HCT116 (cell line): ENCODE measurements at regions of chr1 and their contacts with region 1.

Region 1: GRCh38 chr1:88180449-88181108 is 503.5 kb upstream of the PKN2 start:
- DNase-seq: peak; percentile 71
- ATAC-seq: peak; percentile 97
- H3K4me3 ChIP-seq: no peak overlapping the region
- H3K27ac ChIP-seq: no peak overlapping the region
- H3K4me1 ChIP-seq: peaks cover 2 to 6% of the 10 kb centered on the region in 2 experiments; a peak in 3 of 4 replicates
- H3K27me3 ChIP-seq: no peaks in the 10 kb centered on the region
- CTCF ChIP-seq: peak; percentile 71 to 98 (median 98)
- POLR2A ChIP-seq: no peak
- RAD21 ChIP-seq: peak; percentile 87

Region 2: DNA sequence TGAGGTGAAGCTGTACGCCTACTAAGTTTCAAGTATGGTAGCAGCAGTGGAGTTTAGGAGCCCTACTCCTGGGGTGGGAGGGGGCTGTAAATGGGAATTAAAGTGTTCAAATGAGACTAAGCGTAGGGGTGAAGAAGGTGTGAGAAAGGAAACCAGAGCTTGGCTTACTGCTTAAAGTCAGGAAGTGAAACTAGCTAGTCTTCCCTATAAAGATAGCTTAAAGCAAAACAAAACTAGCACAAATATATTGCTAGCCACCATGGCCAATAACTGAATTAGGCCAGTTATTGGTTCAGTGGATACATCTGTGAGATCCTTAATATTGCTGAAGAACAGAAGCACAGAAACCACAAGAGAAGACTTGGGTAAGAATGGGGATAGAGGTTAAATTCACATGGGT is 11.3 kb after region 1 on chr1:
- CTCF ChIA-PET with region 1: interaction called, 27 read pairs
- POLR2A ChIA-PET with region 1: interaction called, 3 read pairs
- RAD21 ChIA-PET with region 1: no interaction called
- intact Hi-C with region 1: no loop called
- DNase-seq: no peak
- ATAC-seq: no peak
- H3K4me3 ChIP-seq: no peak overlapping the region
- H3K27ac ChIP-seq: no peak overlapping the region
- H3K4me1 ChIP-seq: no peaks in the 10 kb centered on the region
- H3K27me3 ChIP-seq: no peaks in the 10 kb centered on the region
- CTCF ChIP-seq: no peak
- POLR2A ChIP-seq: no peak
- RAD21 ChIP-seq: no peak

Region 3: DNA sequence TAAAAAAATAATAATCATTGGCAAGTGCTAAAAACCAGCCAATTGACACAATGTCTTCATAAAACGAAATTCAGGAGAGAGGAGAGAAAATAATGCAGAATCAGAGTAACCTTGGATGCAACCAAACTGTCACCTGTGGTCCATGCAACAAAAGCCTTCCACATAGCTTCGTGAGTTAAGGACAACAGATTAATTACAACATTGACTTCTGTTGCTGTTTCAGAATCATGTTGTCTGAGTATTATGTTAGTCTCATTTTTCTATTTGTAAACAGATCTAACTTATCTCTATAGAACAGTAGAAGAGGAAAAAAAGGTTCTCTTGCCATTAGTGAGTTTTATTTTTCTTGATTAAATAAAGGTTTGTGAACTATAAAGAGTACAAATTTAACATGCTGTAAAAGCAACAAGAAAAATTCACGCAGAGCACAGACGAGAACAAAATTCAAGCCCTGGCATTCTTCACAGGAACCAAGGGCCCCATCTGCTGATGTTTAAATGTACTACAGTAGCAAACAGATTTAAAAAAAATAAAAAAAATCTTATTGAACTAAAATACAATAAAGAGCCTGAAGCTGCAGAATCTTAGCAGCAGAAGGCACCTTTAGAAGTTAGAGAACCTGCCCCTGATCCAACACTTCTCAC is 122.4 kb after region 1 on chr1:
- CTCF ChIA-PET with region 1: interaction called, 22 read pairs
- POLR2A ChIA-PET with region 1: no interaction called
- RAD21 ChIA-PET with region 1: no interaction called
- intact Hi-C with region 1: loop called (anchors 1 kb)
- DNase-seq: no peak
- ATAC-seq: peak; percentile 50; the same call in 1 of the 2 replicates
- H3K4me3 ChIP-seq: no peak overlapping the region
- H3K27ac ChIP-seq: no peak overlapping the region
- H3K4me1 ChIP-seq: no peaks in the 10 kb centered on the region
- H3K27me3 ChIP-seq: no peaks in the 10 kb centered on the region
- CTCF ChIP-seq: peak in 2 of 3 experiments; percentile 38 to 54; a peak in 2 of 6 replicates
- POLR2A ChIP-seq: no peak
- RAD21 ChIP-seq: peak; percentile 67

Region 4: DNA sequence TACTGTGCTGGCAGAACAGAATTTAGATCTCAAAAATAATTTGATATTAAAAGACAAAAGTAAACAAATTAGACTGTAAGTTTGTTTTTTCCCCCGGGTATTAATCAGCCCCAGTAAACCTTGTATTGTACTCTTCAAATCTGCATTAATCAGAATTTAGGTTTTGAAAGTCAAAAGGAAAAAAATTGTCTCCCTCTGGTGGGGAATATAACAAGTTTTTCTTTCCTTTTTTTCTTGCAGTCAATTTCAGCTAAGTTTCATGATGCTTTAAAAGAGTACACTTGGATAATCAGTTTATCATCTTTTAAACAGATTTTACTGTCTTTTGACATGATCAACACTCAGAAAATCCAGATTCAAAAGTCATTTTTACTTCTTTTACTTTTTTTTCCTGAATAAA is 369.0 kb after region 1 on chr1:
- CTCF ChIA-PET with region 1: interaction called, 9 read pairs
- POLR2A ChIA-PET with region 1: no interaction called
- RAD21 ChIA-PET with region 1: interaction called in 1 of 2 experiments, 3 read pairs
- intact Hi-C with region 1: loop called (anchors 1 kb)
- DNase-seq: peak; percentile 7
- ATAC-seq: no peak
- H3K4me3 ChIP-seq: no peak overlapping the region
- H3K27ac ChIP-seq: no peak overlapping the region
- H3K4me1 ChIP-seq: no peaks in the 10 kb centered on the region
- H3K27me3 ChIP-seq: no peaks in the 10 kb centered on the region
- CTCF ChIP-seq: peak; percentile 17 to 56 (median 29); a peak in 4 of 6 replicates
- POLR2A ChIP-seq: no peak
- RAD21 ChIP-seq: peak; percentile 49

Region 5: GRCh38 chr1:88595355-88596002 is 414.9 kb after region 1 on chr1:
- CTCF ChIA-PET with region 1: no interaction called
- POLR2A ChIA-PET with region 1: no interaction called
- RAD21 ChIA-PET with region 1: no interaction called
- intact Hi-C with region 1: loop called (anchors 1 kb)
- DNase-seq: peak; percentile 62
- ATAC-seq: peak; percentile 80
- H3K4me3 ChIP-seq: no peak overlapping the region
- H3K27ac ChIP-seq: no peak overlapping the region
- H3K4me1 ChIP-seq: peaks cover 0 to 4% of the 10 kb centered on the region in 2 experiments; a peak in 1 of 4 replicates
- H3K27me3 ChIP-seq: no peaks in the 10 kb centered on the region
- CTCF ChIP-seq: peak; percentile 32 to 83 (median 59); a peak in 4 of 6 replicates
- POLR2A ChIP-seq: no peak
- RAD21 ChIP-seq: peak; percentile 72